ENCODE measurements at regions of chr2 and their contacts with region 1.

Region 1: DNA sequence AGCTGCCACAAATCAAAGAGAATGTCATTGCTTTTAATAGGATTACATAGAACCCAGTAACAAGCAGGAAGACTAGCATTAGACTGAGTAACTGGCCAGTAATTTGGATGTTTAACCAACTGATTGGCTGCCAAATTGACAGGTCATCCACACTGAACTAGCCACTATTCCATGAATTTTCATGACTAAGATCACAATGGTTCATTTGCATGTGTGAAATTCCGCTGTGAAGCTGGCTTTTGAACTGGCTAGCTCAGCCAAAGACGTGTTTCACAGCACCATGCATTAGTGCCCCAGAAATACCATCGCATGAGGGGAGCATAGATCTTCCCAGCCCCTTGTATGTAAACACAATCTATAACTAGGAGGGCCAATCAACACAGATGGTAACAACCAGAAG is 649.8 kb downstream of the ARHGAP15 start:
- DNase-seq: no peak

Region 2: DNA sequence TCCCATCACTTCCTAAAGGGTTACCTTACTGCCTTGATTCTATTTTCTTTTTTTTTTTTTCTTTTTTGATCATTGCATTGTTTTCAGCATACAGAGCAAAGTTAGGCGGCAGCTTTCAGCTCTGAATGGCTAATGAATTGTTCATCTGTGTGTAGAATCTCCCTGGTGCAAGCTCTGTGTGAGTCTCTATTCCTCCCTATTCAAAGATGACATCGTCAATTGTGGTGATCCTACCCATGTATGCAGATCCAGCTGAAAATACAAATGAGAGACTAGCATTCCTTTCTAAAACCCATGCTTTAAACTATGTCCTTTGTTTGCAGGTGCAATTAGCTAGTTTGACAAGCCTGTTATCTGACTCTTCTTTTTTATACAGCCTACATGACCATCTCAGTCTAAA is 110.8 kb before region 1 on chr2:
- intact Hi-C with region 1: loop called in 1 of 2 experiments (anchors 5 kb)
- DNase-seq: no peak

Region 3: DNA sequence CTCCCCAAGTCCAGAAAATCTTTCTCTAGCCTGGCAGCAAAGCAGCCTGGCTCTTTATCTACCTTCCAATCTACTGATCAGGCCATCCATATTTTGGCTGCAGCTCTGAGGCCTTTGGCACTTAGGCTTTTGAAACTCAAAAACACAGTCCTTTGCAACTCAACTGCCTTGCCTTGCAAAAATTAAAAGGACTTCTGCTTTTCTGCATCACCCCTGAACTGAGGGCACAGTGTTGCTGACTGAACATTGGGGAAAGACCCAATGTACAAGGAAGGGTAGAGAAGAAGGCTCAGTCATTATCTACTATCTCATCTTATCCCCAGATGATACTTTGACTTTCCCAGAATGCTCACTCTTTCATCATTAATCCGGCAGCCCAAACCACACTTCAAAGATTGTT is 24.3 kb before region 1 on chr2:
- intact Hi-C with region 1: no loop called
- DNase-seq: no peak

Measured in posterior vena cava (tissue), 2 donors.